ENCODE measurements at regions of chr1 and their contacts with region 1.

Region 1: GRCh38 chr1:224302947-224303346 is 27.0 kb downstream of the NVL start:
- DNase-seq: no peak
- H3K4me3 ChIP-seq: no peak overlapping the region
- H3K27ac ChIP-seq: no peak overlapping the region
- H3K4me1 ChIP-seq: no peaks in the 10 kb centered on the region
- H3K27me3 ChIP-seq: no peaks in the 10 kb centered on the region
- CTCF ChIP-seq: no peak

Region 2: GRCh38 chr1:224196813-224197625 is 105.9 kb before region 1 on chr1:
- CTCF ChIA-PET with region 1: interaction called, 10 read pairs
- POLR2A ChIA-PET with region 1: no interaction called
- intact Hi-C with region 1: no loop called
- DNase-seq: peak; percentile 29
- H3K4me3 ChIP-seq: no peak overlapping the region
- H3K27ac ChIP-seq: peak overlapping the region; percentile 0
- H3K4me1 ChIP-seq: peaks cover 12% of the 10 kb centered on the region
- H3K27me3 ChIP-seq: no peaks in the 10 kb centered on the region
- CTCF ChIP-seq: no peak

Region 3: GRCh38 chr1:224317383-224318024 is 14.6 kb after region 1 on chr1:
- CTCF ChIA-PET with region 1: no interaction called
- POLR2A ChIA-PET with region 1: no interaction called
- intact Hi-C with region 1: loop called (anchors 1 kb)
- DNase-seq: peak; percentile 30
- H3K4me3 ChIP-seq: no peak overlapping the region
- H3K27ac ChIP-seq: peak overlapping the region; percentile 29
- H3K4me1 ChIP-seq: no peaks in the 10 kb centered on the region
- H3K27me3 ChIP-seq: no peaks in the 10 kb centered on the region
- CTCF ChIP-seq: no peak

Measured in A673 (cell line).